Mammary epithelial cell (primary cell): ENCODE measurements at regions of chr5 and their contacts with region 1.

Region 1: GRCh38 chr5:155504606-155505005 is 491.1 kb downstream of the KIF4B start:
- DNase-seq: no peak
- H3K4me3 ChIP-seq: no peak overlapping the region
- H3K27ac ChIP-seq: no peak overlapping the region
- H3K4me1 ChIP-seq: no peaks in the 10 kb centered on the region
- H3K27me3 ChIP-seq: no peaks in the 10 kb centered on the region
- CTCF ChIP-seq: no peak

Region 2: GRCh38 chr5:155258161-155258560 is 246.4 kb before region 1 on chr5:
- CTCF ChIA-PET with region 1: no interaction called
- dilution Hi-C with region 1: no loop called
- in situ Hi-C with region 1: no loop called
- intact Hi-C with region 1: loop called (anchors 10 kb)
- DNase-seq: no peak
- H3K4me3 ChIP-seq: no peak overlapping the region
- H3K27ac ChIP-seq: no peak overlapping the region
- H3K4me1 ChIP-seq: peaks cover 6% of the 10 kb centered on the region
- H3K27me3 ChIP-seq: no peaks in the 10 kb centered on the region
- CTCF ChIP-seq: no peak

Region 3: GRCh38 chr5:155529362-155529761 is 24.8 kb after region 1 on chr5:
- CTCF ChIA-PET with region 1: no interaction called
- dilution Hi-C with region 1: no loop called
- in situ Hi-C with region 1: no loop called
- intact Hi-C with region 1: loop called (anchors 2 kb)
- DNase-seq: peak; percentile 100
- H3K4me3 ChIP-seq: no peak overlapping the region
- H3K27ac ChIP-seq: peak overlapping the region; percentile 97
- H3K4me1 ChIP-seq: peaks cover 57% of the 10 kb centered on the region
- H3K27me3 ChIP-seq: no peaks in the 10 kb centered on the region
- CTCF ChIP-seq: no peak